Activated naive CD4-positive, alpha-beta T cell treated with anti-CD3 and anti-CD28 coated beads, Interleukin-2, amount 10 ng/mL, durations not matched to agents 7 days and 5 days (primary cell): ENCODE measurements at regions of chr14 and their contacts with region 1.

Region 1: GRCh38 chr14:22026527-22026926 is 352.9 kb upstream of the OR4E1 start:
- DNase-seq: no peak
- H3K4me3 Mint-ChIP-seq: no peak overlapping the region
- H3K27ac Mint-ChIP-seq: no peak overlapping the region
- H3K4me1 Mint-ChIP-seq: peaks cover 10% of the 10 kb centered on the region
- H3K27me3 Mint-ChIP-seq: peaks cover 6% of the 10 kb centered on the region

Region 2: GRCh38 chr14:22039938-22040775 is 13.6 kb after region 1 on chr14:
- CTCF ChIA-PET with region 1: interaction called, 12 read pairs
- DNase-seq: peak; percentile 72
- H3K4me3 Mint-ChIP-seq: peak overlapping the region; percentile 62
- H3K27ac Mint-ChIP-seq: peak overlapping the region; percentile 73
- H3K4me1 Mint-ChIP-seq: peaks cover 26% of the 10 kb centered on the region
- H3K27me3 Mint-ChIP-seq: no peaks in the 10 kb centered on the region

Region 3: DNA sequence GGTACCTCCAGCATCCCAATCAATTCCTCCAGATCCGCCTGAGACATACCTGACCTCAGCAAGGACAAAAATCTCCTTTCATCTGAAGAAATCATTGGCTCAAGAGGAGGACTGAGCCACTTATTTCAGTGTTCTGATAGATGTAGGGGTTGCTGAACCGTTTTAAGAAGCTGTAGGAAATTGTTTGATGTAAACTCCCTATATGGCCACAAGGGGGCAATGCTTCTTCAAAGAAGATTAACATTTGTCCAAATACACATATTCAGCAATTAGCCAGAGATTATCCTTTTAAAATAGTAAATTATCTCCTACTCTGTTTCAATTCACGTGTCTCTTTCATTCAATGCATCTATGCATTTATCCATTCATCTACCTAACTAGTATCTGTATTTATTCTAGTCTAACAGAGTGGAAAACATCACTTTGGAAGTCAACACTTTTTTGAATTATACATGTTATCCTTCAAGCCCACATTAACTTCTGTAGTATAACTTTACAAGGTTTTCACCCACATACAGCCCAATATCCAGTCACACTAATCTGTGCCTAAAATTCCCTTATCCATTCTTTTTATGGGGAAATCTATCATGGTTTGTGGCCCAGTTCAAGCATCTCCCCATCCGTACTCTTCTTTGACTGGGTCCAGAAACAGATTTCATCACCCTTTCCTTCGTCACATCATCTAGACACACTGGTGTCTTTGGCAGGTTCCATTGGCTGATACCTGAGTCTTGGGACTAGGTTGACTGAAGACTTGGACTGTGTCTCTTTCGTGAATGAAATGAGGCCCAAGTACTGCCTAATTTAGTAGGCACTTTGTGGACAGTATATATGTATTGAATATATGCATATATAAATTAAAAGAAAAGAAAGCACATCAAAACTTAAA is 58.1 kb after region 1 on chr14:
- CTCF ChIA-PET with region 1: no interaction called
- DNase-seq: no peak
- H3K4me3 Mint-ChIP-seq: peak overlapping the region; percentile 69
- H3K27ac Mint-ChIP-seq: peak overlapping the region; percentile 79
- H3K4me1 Mint-ChIP-seq: peaks cover 42% of the 10 kb centered on the region
- H3K27me3 Mint-ChIP-seq: no peaks in the 10 kb centered on the region